Endothelial cell of umbilical vein (primary cell): ENCODE measurements at regions of chr22 and their contacts with region 1.

Region 1: DNA sequence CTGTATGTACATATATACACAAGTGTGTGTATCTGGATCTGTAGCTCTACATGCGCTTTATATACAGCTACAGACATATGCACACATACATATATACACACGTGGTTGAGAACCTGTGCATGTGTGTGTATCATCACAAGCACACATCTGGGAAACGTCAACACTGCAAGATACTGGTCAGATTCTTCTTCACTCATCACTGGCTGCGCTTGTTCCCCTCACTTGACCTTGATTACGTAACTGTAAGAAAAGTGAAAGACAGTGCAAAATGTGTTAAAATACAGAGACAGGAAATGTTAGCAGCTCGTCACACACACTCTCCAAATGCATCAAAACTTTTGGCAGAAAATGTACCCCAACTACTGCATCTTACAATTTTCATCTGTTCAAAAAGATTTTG is 51.9 kb upstream of the MN1 start:
- DNase-seq: no peak
- H3K4me3 ChIP-seq: no peak overlapping the region
- H3K27ac ChIP-seq: no peak overlapping the region
- H3K4me1 ChIP-seq: peaks cover 14% of the 10 kb centered on the region
- H3K27me3 ChIP-seq: no peaks in the 10 kb centered on the region
- CTCF ChIP-seq: no peak
- POLR2A ChIP-seq: no peak

Region 2: DNA sequence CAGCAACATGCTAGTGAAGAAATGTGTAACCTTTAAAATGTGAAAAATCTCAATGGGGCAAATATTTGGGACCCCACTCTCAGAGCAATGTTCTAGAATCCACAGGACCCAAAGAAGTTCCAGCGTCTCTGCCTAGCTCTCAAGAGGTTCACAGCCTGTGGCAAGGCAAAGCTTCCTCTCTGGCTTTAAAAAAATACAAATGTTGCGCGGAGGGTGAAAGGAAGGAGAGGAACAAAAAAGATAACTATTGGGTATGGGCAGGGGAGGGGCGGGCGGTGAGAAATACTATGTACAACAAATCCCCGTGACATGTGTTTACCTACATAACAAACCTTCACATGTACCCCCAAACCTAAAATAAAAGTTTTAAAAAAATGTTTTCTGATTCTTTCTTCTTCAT is 12.1 kb after region 1 on chr22:
- CTCF ChIA-PET with region 1: interaction called, 14 read pairs
- POLR2A ChIA-PET with region 1: no interaction called
- dilution Hi-C with region 1: no loop called
- intact Hi-C with region 1: no loop called
- DNase-seq: no peak
- H3K4me3 ChIP-seq: no peak overlapping the region
- H3K27ac ChIP-seq: peak overlapping the region; percentile 26
- H3K4me1 ChIP-seq: peaks cover 17% of the 10 kb centered on the region
- H3K27me3 ChIP-seq: no peaks in the 10 kb centered on the region
- CTCF ChIP-seq: no peak
- POLR2A ChIP-seq: no peak